Psoas muscle (tissue), 8 donors: ENCODE measurements at regions of chr13 and their contacts with region 1.

Region 1: GRCh38 chr13:86932776-86933334 is 738.3 kb upstream of the SLITRK5 start:
- DNase-seq: no peak
- ATAC-seq: no peak
- H3K4me3 ChIP-seq: no peak overlapping the region
- H3K27ac ChIP-seq: no peak overlapping the region
- H3K4me1 ChIP-seq: no peaks in the 10 kb centered on the region
- H3K27me3 ChIP-seq: no peaks in the 10 kb centered on the region
- CTCF ChIP-seq: no peak

Region 2: GRCh38 chr13:86918682-86919081 is 14.2 kb before region 1 on chr13:
- intact Hi-C with region 1: loop called in 1 of 2 experiments (anchors 2 kb)
- DNase-seq: no peak
- ATAC-seq: no peak
- H3K4me3 ChIP-seq: no peak overlapping the region
- H3K27ac ChIP-seq: no peak overlapping the region
- H3K4me1 ChIP-seq: no peaks in the 10 kb centered on the region
- H3K27me3 ChIP-seq: no peaks in the 10 kb centered on the region
- CTCF ChIP-seq: no peak

Region 3: GRCh38 chr13:87042946-87043345 is 110.1 kb after region 1 on chr13:
- intact Hi-C with region 1: no loop called
- DNase-seq: no peak
- ATAC-seq: no peak
- H3K4me3 ChIP-seq: no peak overlapping the region
- H3K27ac ChIP-seq: no peak overlapping the region
- H3K4me1 ChIP-seq: no peaks in the 10 kb centered on the region
- H3K27me3 ChIP-seq: no peaks in the 10 kb centered on the region
- CTCF ChIP-seq: no peak